Activated T-helper 2 cell treated with anti-CD3 and anti-CD28 coated beads, Interferon-gamma antibody, Interleukin-2, Interleukin-4, amounts not matched to agents 10 μg/mL and 5 μg/mL and 100 μg/mL, durations not matched to agents 14 hours and 24 hours and 36 hours (primary cell): ENCODE measurements at regions of chr17 and their contacts with region 1.

Region 1: DNA sequence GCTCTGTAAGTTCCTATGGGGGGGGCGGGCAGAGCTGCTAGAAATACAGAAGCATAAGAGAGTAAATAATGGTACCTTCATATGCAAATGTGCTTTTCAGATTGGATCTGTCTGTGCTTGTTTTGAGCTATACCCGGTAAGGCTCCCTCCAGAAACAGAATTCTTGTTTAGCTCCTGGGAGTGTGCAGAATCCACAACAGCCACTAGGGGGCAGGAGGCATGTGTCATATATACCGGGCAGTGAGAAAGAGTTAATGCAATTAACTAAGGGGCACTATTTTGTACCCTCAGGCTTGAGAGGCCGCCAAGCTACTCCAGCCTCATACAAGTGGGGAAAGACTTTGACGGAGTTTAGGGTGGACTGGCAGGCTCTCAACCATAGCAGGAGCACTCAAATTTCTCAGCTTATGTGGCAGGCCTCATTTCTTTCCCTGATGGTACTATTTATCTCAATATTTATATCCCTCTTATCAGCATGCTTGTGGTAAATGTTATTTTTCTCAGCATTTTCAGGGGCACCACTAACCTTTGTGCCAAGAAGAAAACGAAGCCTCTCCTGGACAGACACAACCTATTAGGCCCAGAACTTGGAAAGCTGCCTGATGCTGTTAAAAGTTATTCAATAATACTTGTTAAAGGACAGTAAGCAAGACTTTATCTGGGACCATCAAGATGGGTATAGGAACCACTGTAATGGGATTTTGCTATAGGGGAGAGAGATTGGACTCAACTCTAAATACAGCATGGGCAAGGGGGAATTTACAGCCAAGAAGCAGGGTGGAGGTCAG is 10.7 kb upstream of the CENPV start:
- DNase-seq: peak; percentile 61
- H3K4me3 Mint-ChIP-seq: no peak overlapping the region
- H3K27ac Mint-ChIP-seq: no peak overlapping the region
- H3K4me1 Mint-ChIP-seq: peaks cover 4% of the 10 kb centered on the region
- H3K27me3 Mint-ChIP-seq: no peaks in the 10 kb centered on the region

Region 2: DNA sequence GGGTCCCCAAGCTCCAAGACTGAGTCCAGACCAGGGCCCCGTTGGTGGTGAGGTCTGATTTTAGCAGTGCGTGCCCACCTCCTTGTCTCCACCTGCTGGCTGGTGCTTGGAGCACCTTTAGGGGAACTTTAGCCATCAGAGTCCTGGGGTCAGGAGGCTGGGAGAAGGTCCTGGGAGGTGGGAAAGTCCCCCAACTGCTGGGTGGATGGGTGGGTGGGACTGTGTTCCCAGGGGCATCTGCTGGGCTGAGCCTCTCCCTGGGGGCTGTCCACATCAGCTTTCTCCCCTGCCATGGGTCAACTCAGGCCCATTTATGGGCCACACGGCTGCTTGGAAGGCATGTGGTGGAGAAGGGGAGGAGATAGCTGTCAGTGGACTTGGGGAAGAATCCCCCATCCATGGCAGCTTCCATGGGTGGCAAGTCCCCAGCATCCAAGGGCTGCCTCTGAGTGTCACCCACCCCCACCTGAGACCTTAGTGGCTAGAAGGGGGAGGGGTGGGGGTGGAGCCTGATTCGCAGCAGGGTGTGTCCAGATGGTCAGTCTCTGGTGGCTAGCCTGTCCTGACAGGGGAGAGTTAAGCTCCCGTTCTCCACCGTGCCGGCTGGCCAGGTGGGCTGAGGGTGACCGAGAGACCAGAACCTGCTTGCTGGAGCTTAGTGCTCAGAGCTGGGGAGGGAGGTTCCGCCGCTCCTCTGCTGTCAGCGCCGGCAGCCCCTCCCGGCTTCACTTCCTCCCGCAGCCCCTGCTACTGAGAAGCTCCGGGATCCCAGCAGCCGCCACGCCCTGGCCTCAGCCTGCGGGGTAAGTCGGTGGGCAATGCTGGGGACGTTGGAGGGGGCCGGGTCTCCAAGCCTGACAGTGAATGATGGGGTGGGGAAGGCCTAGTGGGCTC is 51.3 kb after region 1 on chr17 and contains the start of gene TRPV2:
- intact Hi-C with region 1: loop called (anchors 5 kb)
- DNase-seq: peak; percentile 30
- H3K4me3 Mint-ChIP-seq: peak within 1 kb of the TSS; percentile 96
- H3K27ac Mint-ChIP-seq: peak within 1 kb of the TSS; percentile 96
- H3K4me1 Mint-ChIP-seq: peaks cover 37% of the 10 kb centered on the region
- H3K27me3 Mint-ChIP-seq: no peaks in the 10 kb centered on the region
- total RNA-seq, gene TRPV2: 44.4 and 46.8 TPM in 2 replicates

Region 3: DNA sequence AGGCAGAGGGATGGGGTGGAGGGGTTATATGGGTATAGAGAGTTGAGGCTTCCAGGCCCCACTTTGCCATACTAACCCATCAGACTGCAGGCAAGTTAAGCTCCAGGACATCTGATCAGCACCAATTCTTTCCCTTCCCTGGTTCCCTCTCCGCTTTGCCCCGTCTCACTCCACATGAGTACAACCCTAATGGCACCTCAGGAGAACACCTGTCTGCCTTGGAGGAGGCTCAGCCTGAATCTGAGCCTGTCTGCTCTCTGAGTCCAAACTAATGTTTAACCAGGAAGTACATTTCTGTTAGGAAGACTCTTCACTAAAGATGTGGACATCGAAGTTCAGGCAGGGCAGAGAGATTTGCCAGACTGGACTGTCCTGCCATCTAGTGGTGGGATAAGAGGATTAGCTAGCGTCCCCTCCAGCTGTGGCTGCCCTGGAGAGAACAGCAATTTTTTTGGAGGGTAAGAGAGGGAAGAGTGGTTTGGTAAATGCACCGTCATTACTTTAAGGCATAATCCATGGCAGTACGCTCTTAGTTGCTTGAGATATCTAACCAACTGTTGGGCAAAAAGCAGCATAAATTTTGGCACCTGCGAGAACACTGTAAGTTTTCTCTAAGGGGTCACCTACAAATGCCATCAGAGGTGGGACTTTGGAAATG is 157.3 kb after region 1 on chr17:
- intact Hi-C with region 1: loop called (anchors 1 kb)
- DNase-seq: peak; percentile 47
- H3K4me3 Mint-ChIP-seq: no peak overlapping the region
- H3K27ac Mint-ChIP-seq: no peak overlapping the region
- H3K4me1 Mint-ChIP-seq: peaks cover 8% of the 10 kb centered on the region
- H3K27me3 Mint-ChIP-seq: peaks cover 24% of the 10 kb centered on the region